CD14-positive monocyte (primary cell): ENCODE measurements at regions of chr5 and their contacts with region 1.

Region 1: DNA sequence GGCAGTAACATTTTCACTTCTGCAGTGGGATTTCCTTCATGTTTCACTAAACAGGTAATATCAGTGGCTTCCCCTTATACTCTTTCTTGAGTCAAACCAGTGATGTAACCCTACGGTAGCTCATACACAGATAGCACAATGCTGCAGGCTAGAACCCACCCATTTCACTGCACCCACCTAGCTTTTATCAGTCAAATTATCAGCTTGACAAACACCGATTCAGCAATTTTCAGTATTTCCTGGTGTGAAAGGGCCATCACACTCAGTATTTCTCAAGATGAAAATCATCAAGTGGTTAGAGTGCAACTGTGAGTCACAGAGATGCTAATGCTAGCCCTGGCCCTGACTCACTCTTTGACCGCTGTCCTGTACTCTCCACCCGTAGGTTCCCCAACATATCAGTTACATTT is 242.3 kb upstream of the PTGER4 start:
- DNase-seq: peak; percentile 87 to 98 (median 96)
- H3K4me3 ChIP-seq: peak overlapping the region in 2 of 3 experiments; percentile 19 to 48
- H3K4me3 Mint-ChIP-seq: peak overlapping the region in 1 of 2 donors; percentile 48
- H3K27ac ChIP-seq: peak overlapping the region; percentile 33 to 90
- H3K27ac Mint-ChIP-seq: peak overlapping the region; percentile 86 to 95 (median 93)
- H3K4me1 ChIP-seq: peaks cover 26% of the 10 kb centered on the region in 2 donors
- H3K4me1 Mint-ChIP-seq: peaks cover 31% of the 10 kb centered on the region
- H3K27me3 ChIP-seq: no peaks in the 10 kb centered on the region
- H3K27me3 Mint-ChIP-seq: peaks cover 0 to 2% (median 0%) of the 10 kb centered on the region in 3 donors
- CTCF ChIP-seq: no peak

Region 2: GRCh38 chr5:40106847-40107246 is 330.6 kb before region 1 on chr5:
- intact Hi-C with region 1: no loop called
- DNase-seq: no peak
- H3K4me3 ChIP-seq: no peak overlapping the region
- H3K4me3 Mint-ChIP-seq: no peak overlapping the region
- H3K27ac ChIP-seq: no peak overlapping the region
- H3K27ac Mint-ChIP-seq: no peak overlapping the region
- H3K4me1 ChIP-seq: no peaks in the 10 kb centered on the region
- H3K4me1 Mint-ChIP-seq: no peaks in the 10 kb centered on the region
- H3K27me3 ChIP-seq: no peaks in the 10 kb centered on the region
- H3K27me3 Mint-ChIP-seq: peaks cover 0 to 2% (median 0%) of the 10 kb centered on the region in 3 donors
- CTCF ChIP-seq: no peak

Region 3: DNA sequence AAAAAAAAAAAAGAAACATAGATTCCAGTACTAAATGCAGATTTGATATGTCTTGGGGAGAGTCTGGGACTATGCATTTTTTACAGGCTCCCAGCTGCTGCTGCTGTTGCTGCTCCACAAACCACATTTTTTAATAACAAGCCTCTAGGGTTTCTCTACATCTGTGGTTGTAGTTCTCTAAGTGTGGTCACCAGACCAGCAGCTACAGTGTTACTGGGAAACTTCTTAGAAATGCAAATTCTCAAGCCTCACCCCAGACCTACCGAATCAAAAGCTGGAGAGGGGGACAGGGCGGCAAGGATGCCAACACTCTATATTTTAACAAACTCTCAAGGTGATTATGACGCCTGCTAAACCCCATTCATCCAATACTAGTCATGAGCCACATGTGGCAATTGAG is 51.2 kb before region 1 on chr5:
- intact Hi-C with region 1: loop called (anchors 10 kb)
- DNase-seq: no peak
- H3K4me3 ChIP-seq: no peak overlapping the region
- H3K4me3 Mint-ChIP-seq: no peak overlapping the region
- H3K27ac ChIP-seq: peak overlapping the region in 1 of 2 donors; percentile 86
- H3K27ac Mint-ChIP-seq: peak overlapping the region in 6 of 7 donors; percentile 10 to 96 (median 56)
- H3K4me1 ChIP-seq: peaks cover 56 to 65% of the 10 kb centered on the region in 2 donors
- H3K4me1 Mint-ChIP-seq: peaks cover 50% of the 10 kb centered on the region
- H3K27me3 ChIP-seq: no peaks in the 10 kb centered on the region
- H3K27me3 Mint-ChIP-seq: peaks cover 0 to 1% (median 0%) of the 10 kb centered on the region in 3 donors
- CTCF ChIP-seq: no peak

Region 4: GRCh38 chr5:40404613-40405012 is 32.8 kb before region 1 on chr5:
- intact Hi-C with region 1: loop called in 1 of 2 experiments (anchors 5 kb)
- DNase-seq: peak; percentile 40 to 76 (median 70)
- H3K4me3 ChIP-seq: peak overlapping the region in 1 of 3 experiments; percentile 15
- H3K4me3 Mint-ChIP-seq: peak overlapping the region in 1 of 2 donors; percentile 21
- H3K27ac ChIP-seq: peak overlapping the region in 1 of 2 donors; percentile 91
- H3K27ac Mint-ChIP-seq: peak overlapping the region; percentile 90 to 99 (median 99)
- H3K4me1 ChIP-seq: peaks cover 64 to 66% of the 10 kb centered on the region in 2 donors
- H3K4me1 Mint-ChIP-seq: peaks cover 67% of the 10 kb centered on the region
- H3K27me3 ChIP-seq: no peaks in the 10 kb centered on the region
- H3K27me3 Mint-ChIP-seq: peaks cover 0 to 2% (median 0%) of the 10 kb centered on the region in 3 donors
- CTCF ChIP-seq: no peak

Region 5: DNA sequence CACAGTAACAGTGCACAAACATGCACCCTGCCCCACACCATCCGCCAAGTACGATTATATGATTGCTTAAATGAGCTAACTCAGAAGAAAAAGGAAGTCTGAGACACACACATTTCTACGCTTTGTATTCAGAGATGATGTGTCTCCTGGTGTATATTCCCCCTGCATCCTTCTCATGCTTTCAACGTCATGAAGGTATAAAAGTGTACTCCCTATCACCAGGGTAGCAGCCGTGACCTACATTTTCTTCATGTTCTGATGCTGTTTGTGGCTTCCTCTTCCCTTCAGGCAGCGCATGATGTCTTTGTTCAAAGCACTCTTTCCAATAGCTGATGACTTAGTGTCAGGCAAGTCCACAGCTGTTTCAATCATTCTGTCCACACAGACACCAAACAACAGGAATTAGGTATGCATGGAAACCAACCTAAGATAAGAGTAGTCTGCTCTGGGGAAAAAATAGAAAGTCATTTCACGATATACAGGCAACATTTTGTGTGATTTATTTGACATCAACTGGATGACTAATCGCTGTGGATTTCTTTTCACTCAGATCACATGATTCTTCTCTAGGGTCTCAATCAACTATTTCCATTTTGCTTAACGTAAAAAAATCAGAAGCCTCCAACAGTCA is 27.1 kb before region 1 on chr5:
- intact Hi-C with region 1: loop called (anchors 2 kb)
- DNase-seq: peak; percentile 84 to 91 (median 89)
- H3K4me3 ChIP-seq: peak overlapping the region in 2 of 3 experiments; percentile 32 to 56
- H3K4me3 Mint-ChIP-seq: peak overlapping the region; percentile 60 to 82
- H3K27ac ChIP-seq: peak overlapping the region; percentile 83 to 96
- H3K27ac Mint-ChIP-seq: peak overlapping the region; percentile 97 to 100 (median 99)
- H3K4me1 ChIP-seq: peaks cover 78 to 84% of the 10 kb centered on the region in 2 donors
- H3K4me1 Mint-ChIP-seq: peaks cover 79% of the 10 kb centered on the region
- H3K27me3 ChIP-seq: no peaks in the 10 kb centered on the region
- H3K27me3 Mint-ChIP-seq: peaks cover 0 to 2% (median 0%) of the 10 kb centered on the region in 3 donors
- CTCF ChIP-seq: no peak

Region 6: DNA sequence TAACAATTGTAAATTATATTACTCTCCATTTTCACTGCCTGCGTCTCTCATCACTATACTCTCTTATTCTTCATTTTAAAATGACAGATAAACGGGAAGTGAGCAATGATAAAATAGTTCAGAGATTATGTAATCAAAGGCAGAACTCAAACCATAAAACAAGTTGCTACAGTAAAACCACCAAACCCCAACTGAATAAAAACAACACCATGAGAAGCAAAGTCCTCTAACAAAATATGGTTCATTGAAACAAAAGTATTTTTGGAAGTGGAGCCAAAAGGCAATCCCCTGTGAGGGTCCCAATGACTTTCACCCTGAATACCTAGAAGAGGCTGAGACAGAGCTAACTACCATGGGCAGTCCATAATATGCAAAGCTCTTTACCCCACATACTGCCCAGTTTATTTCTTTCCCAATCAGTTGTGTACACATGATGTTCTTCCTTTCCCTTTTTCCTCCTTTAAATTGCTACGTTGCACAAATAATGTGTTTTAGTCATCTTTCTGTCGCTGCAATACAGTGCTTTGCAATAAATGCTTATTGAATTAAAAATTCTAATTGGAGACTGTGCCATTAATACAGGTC is 178.2 kb after region 1 on chr5:
- intact Hi-C with region 1: loop called in 1 of 2 experiments (anchors 5 kb)
- DNase-seq: peak; percentile 69 to 84 (median 80)
- H3K4me3 ChIP-seq: peak overlapping the region in 2 of 3 experiments; percentile 16 to 60
- H3K4me3 Mint-ChIP-seq: peak overlapping the region in 1 of 2 donors; percentile 53
- H3K27ac ChIP-seq: peak overlapping the region; percentile 15 to 90
- H3K27ac Mint-ChIP-seq: peak overlapping the region; percentile 91 to 98 (median 95)
- H3K4me1 ChIP-seq: peaks cover 33 to 46% of the 10 kb centered on the region in 2 donors
- H3K4me1 Mint-ChIP-seq: peaks cover 37% of the 10 kb centered on the region
- H3K27me3 ChIP-seq: no peaks in the 10 kb centered on the region
- H3K27me3 Mint-ChIP-seq: no peaks in the 10 kb centered on the region
- CTCF ChIP-seq: no peak